BJ (cell line): ENCODE measurements at regions of chr1 and their contacts with region 1.

Region 1: GRCh38 chr1:151549176-151549575 is 9.1 kb downstream of the TUFT1 start:
- DNase-seq: no peak
- H3K4me3 ChIP-seq: no peak overlapping the region
- H3K27me3 ChIP-seq: no peaks in the 10 kb centered on the region
- CTCF ChIP-seq: no peak

Region 2: DNA sequence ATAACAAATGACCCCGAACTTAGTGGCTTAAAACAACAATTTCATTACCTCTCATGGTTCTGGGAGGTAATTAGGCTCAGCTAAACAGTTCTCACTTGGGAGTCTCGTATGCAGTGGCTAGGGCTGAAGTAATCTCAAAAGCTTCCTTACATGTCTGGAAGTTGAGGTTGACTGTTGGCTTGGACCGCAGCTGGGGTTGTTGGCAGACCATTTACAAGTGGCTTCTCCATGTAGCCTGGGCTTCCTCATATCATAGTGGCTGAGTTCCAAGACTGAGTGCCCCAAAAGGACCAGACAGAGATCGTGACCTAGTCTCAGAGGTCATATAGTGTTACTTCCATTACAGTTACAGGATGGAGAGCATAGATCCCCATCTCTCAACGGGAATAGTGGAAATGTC is 87.5 kb before region 1 on chr1:
- CTCF ChIA-PET with region 1: no interaction called
- POLR2A ChIA-PET with region 1: interaction called, 11 read pairs
- DNase-seq: no peak
- H3K4me3 ChIP-seq: no peak overlapping the region
- H3K27me3 ChIP-seq: peaks cover 4% of the 10 kb centered on the region; the same call in 1 of the 2 replicates
- CTCF ChIP-seq: no peak